T-cell (primary cell): ENCODE measurements at regions of chr13 and their contacts with region 1.

Region 1: DNA sequence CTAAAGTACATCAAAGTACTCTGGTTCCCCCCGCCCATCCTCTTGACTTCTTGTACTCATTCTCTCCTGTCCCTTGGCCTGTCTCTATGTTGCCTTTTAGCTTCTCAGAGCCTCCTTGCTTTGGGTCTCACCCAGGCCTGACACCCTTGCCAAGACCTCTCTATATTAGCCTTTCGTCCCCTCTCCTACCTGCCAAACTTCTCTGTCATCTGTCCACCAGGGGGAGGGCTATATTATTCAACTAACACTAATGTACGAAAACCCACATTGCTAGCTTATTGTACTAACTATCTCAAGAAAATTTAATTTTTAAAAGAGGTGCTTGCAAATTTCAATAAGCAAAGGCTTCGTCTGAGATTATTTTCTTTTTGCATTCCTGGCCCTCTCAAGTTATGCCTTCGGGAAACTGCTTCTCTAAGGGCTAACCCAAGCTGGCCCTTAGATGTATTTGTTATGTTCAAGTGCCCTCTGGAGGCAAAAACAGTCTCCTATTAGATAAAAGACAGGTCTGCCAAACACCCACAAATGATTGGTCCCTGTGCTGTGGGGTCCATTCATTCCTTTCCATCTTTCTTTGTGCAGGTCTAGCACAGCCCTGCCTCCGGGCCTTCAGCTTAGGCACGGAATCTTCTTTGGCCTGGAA is 6.3 kb upstream of the MRPS31 start:
- DNase-seq: peak in 19 of 35 experiments; percentile 7 to 73 (median 29)
- ATAC-seq: peak; percentile 61 to 69 (median 64)
- H3K4me3 ChIP-seq: peak overlapping the region in 1 of 2 donors; percentile 31
- H3K4me3 Mint-ChIP-seq: peak overlapping the region; percentile 71 to 79 (median 72)
- H3K27ac ChIP-seq: peak overlapping the region; percentile 82
- H3K27ac Mint-ChIP-seq: peak overlapping the region; percentile 97 to 98
- H3K4me1 ChIP-seq: peaks cover 12 to 29% of the 10 kb centered on the region in 2 experiments
- H3K4me1 Mint-ChIP-seq: peaks cover 31 to 34% (median 33%) of the 10 kb centered on the region in 3 donors
- H3K27me3 ChIP-seq: no peaks in the 10 kb centered on the region
- H3K27me3 Mint-ChIP-seq: no peaks in the 10 kb centered on the region

Region 2: DNA sequence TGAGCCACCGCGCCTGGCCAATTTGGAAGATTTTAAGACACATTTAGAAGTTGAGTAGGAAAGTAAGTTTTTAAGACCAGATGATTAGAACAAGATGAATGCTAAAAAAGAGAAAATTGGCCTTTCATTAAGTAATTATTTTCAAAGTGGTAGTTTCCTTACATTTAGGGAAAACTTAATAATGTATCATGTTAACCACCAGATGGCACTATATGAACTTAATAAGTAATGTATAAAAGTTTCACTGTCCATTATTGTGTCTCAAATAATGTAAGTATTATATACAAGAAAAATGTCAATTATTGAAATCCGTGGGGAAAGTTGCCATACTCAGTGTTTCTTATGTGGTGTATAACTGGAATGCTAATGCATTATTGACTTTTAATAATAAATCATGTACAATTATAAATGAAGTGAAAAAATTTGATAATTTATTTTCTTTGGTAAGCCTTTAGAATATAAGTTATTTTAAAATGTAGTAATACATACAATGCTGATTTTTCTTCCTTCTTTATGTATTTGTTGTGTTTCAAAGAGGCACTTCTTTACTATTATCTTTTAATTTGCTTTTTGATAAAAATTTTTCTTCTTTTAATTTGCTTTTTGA is 1092.7 kb before region 1 on chr13:
- CTCF ChIA-PET with region 1: interaction called, 5 to 12 read pairs
- POLR2A ChIA-PET with region 1: no interaction called
- DNase-seq: peak in 1 of 35 experiments; percentile 44
- ATAC-seq: no peak
- H3K4me3 ChIP-seq: no peak overlapping the region
- H3K4me3 Mint-ChIP-seq: no peak overlapping the region
- H3K27ac ChIP-seq: no peak overlapping the region
- H3K27ac Mint-ChIP-seq: no peak overlapping the region
- H3K4me1 ChIP-seq: no peaks in the 10 kb centered on the region
- H3K4me1 Mint-ChIP-seq: peaks cover 5 to 16% (median 8%) of the 10 kb centered on the region in 3 donors
- H3K27me3 ChIP-seq: no peaks in the 10 kb centered on the region
- H3K27me3 Mint-ChIP-seq: no peaks in the 10 kb centered on the region

Region 3: DNA sequence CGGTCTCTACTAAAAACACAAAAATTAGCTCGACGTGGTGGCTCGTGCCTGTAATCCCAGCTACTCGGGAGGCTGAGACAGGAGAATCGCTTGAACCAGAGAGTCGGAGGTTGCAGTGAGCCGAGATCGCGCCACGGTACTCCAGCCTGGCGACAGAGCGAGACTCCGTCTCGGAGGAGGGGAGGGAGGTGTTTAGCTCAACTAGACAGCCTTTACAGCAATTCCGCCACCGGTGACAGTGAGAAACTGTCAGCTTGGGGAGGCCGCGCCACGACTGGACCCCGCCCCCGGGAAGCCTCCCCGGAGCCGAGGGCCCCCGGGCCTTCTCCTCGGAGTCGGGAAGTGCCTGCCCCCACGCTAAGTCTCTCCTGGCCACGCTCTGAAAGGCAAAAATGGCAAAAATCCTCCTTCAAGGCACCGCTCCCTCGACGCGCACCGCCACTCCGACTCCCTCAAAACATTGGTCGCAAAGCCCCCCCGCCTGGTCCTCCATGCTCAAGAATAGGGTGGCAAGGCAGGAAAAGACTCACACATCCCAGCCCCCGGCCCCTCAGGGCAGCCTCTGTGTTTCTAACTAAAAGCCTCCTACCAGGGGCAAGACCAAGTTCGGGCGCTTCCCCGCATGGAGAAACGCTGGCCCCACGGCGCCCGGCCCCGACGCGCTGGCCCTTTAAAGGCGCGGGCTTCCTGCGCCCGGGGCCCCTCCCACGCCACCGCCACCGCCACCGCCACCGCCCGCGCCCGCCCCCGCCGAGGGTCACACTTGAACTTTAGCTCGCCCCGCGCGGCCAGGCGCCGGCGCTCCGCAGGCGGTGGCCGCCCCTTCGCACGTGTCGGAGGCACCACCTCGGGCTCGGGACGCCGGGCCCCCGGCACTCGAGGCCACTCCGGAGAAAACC is 112.9 kb before region 1 on chr13:
- CTCF ChIA-PET with region 1: interaction called in 1 of 2 experiments, 12 read pairs
- POLR2A ChIA-PET with region 1: no interaction called
- DNase-seq: peak; percentile 45 to 80 (median 66)
- ATAC-seq: peak; percentile 35 to 44 (median 38)
- H3K4me3 ChIP-seq: peak overlapping the region; percentile 71 to 96
- H3K4me3 Mint-ChIP-seq: peak overlapping the region; percentile 90 to 98 (median 96)
- H3K27ac ChIP-seq: peak overlapping the region; percentile 84
- H3K27ac Mint-ChIP-seq: peak overlapping the region; percentile 94 to 95
- H3K4me1 ChIP-seq: peaks cover 35 to 38% of the 10 kb centered on the region in 2 experiments
- H3K4me1 Mint-ChIP-seq: peaks cover 48 to 62% (median 56%) of the 10 kb centered on the region in 3 donors
- H3K27me3 ChIP-seq: no peaks in the 10 kb centered on the region
- H3K27me3 Mint-ChIP-seq: no peaks in the 10 kb centered on the region

Region 4: DNA sequence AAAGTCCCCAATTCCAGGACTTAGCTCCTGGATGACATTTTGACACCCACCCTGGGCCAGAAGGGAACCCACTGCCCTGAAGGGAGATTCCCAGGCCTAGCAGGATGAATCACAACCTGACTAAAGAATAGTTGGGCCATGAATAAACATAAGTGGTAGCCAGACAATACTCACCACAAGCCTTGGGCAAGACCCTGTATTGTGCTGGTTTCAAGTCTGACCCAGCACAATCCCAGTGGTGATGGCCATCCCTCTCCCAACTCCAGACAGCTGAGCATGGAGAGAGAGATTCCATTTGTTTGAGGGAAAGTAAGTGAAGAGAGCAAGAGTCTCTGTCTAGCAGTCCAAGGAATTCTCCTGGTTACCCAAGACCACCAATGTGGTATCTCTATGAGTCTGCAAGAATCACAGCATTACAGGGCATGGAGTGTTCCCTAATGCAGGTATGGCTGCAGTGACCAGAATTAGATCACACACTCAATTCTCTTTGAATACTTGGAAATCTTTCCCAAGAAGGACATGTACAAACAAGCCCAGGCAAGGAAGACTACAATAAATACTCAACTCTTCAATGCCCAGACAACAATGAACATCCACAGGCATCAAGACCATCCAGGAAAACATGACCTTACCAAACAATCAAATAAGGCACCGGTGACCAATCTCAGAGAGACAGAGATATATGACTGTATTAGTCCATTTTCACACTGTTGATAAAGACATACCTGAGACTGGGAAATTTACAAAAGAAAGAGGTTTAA is 1025.6 kb after region 1 on chr13:
- CTCF ChIA-PET with region 1: no interaction called
- POLR2A ChIA-PET with region 1: no interaction called
- DNase-seq: no peak
- ATAC-seq: no peak
- H3K4me3 ChIP-seq: no peak overlapping the region
- H3K4me3 Mint-ChIP-seq: no peak overlapping the region
- H3K27ac ChIP-seq: no peak overlapping the region
- H3K27ac Mint-ChIP-seq: no peak overlapping the region
- H3K4me1 ChIP-seq: no peaks in the 10 kb centered on the region
- H3K4me1 Mint-ChIP-seq: no peaks in the 10 kb centered on the region
- H3K27me3 ChIP-seq: no peaks in the 10 kb centered on the region
- H3K27me3 Mint-ChIP-seq: no peaks in the 10 kb centered on the region